Ovary (tissue), 10 donors: ENCODE measurements at regions of chr1 and their contacts with region 1.

Region 1: DNA sequence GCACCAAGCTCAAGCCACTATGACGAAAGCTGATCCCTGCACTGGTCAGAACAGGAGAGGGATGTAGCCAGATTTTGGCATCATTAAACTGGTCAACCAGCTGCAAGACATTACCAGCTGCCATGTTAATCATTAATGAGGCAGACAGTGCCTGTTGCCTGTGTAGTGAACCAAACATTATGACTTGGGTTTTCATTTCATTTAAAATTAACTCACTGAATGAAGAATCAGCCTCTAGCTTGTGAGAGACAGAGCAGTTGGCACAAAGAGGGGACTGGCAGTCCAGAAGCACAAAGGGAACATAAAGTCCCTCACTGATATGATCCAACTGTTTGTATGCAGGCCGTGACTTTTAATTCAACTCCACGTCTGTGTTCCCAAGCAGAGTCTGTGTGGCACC is 318.9 kb downstream of the SEC16B start:
- DNase-seq: no peak
- H3K4me3 ChIP-seq: no peak overlapping the region
- H3K27ac ChIP-seq: no peak overlapping the region
- H3K4me1 ChIP-seq: no peaks in the 10 kb centered on the region
- H3K27me3 ChIP-seq: no peaks in the 10 kb centered on the region
- CTCF ChIP-seq: no peak
- EP300 ChIP-seq: no peak
- POLR2A ChIP-seq: no peak

Region 2: GRCh38 chr1:176033881-176034280 is 1617.1 kb before region 1 on chr1:
- intact Hi-C with region 1: loop called in 1 of 4 experiments (anchors 5 kb)
- DNase-seq: no peak
- H3K4me3 ChIP-seq: no peak overlapping the region
- H3K27ac ChIP-seq: no peak overlapping the region
- H3K4me1 ChIP-seq: no peaks in the 10 kb centered on the region
- H3K27me3 ChIP-seq: no peaks in the 10 kb centered on the region
- CTCF ChIP-seq: no peak
- EP300 ChIP-seq: no peak
- POLR2A ChIP-seq: no peak